ENCODE measurements at regions of chr2 and their contacts with region 1.

Region 1: GRCh38 chr2:222707689-222708525 is 36.4 kb downstream of the MOGAT1 start:
- DNase-seq: peak; percentile 53
- H3K4me3 Mint-ChIP-seq: no peak overlapping the region
- H3K27ac Mint-ChIP-seq: no peak overlapping the region
- H3K4me1 Mint-ChIP-seq: peaks cover 18% of the 10 kb centered on the region
- H3K27me3 Mint-ChIP-seq: peaks cover 33% of the 10 kb centered on the region

Region 2: DNA sequence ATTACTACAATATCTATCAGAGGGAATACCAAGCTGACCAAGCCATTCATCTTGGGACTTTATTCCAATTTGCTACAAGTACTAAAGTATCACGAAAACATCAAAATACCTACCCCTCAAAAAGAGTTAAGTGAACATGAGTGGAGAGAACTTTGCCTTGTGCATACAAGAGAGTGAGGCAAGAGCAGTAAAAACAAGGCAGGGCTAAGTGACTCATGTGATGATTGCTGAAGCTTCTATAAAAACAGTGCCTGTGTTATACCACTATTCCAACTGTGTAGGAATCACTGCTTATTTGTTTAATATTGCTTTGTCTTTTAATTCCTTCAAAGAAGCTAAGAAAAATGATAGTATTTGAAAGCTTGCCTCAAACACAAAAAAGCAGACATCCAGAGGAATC is 113.2 kb before region 1 on chr2:
- intact Hi-C with region 1: no loop called
- DNase-seq: no peak
- H3K4me3 Mint-ChIP-seq: no peak overlapping the region
- H3K27ac Mint-ChIP-seq: no peak overlapping the region
- H3K4me1 Mint-ChIP-seq: peaks cover 2% of the 10 kb centered on the region
- H3K27me3 Mint-ChIP-seq: no peaks in the 10 kb centered on the region

Region 3: GRCh38 chr2:222747526-222748160 is 39.7 kb after region 1 on chr2:
- intact Hi-C with region 1: loop called (anchors 5 kb)
- DNase-seq: no peak
- H3K4me3 Mint-ChIP-seq: no peak overlapping the region
- H3K27ac Mint-ChIP-seq: no peak overlapping the region
- H3K4me1 Mint-ChIP-seq: peaks cover 45% of the 10 kb centered on the region
- H3K27me3 Mint-ChIP-seq: peaks cover 2% of the 10 kb centered on the region

Region 4: GRCh38 chr2:222792001-222792611 is 84.2 kb after region 1 on chr2:
- intact Hi-C with region 1: loop called (anchors 5 kb)
- DNase-seq: no peak
- H3K4me3 Mint-ChIP-seq: no peak overlapping the region
- H3K27ac Mint-ChIP-seq: no peak overlapping the region
- H3K4me1 Mint-ChIP-seq: peaks cover 13% of the 10 kb centered on the region
- H3K27me3 Mint-ChIP-seq: peaks cover 2% of the 10 kb centered on the region

Region 5: DNA sequence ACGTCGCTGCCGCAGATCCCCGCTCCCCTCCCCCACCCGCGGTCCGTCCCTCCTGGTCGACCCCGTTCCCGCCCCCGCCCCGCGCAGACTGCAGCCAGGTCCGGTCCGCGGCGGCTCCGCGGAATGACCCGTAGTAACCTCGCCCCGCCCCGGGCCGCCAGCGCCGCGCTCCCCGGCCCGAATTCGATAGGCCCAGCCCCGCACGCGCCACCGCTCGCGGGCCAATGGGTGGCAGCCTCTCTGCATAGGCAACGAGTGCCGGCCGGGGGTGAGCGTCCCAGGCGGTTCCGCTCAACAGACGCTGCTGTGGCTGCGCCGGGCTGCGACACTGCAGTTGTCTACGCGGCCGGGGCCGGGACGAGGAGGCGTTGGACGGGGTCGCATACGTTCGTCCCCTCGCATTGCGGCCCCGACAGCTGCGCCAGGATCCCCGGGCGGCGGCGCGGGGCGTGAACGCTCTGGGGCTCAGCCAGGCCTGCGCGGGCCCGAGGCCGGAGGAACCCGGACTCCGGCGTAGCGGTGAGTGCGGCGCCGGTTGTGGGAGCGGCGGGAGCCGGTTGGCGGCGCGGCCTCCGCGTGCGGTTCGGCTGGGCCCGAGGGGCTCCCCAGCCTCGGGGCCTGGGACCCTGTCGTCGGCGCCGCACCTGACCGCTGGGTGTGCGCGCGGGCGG is 153.0 kb after region 1 on chr2 and contains the start of gene ACSL3:
- intact Hi-C with region 1: loop called (anchors 1 kb)
- DNase-seq: peak; percentile 93
- H3K4me3 Mint-ChIP-seq: peak within 1 kb of the TSS; percentile 76
- H3K27ac Mint-ChIP-seq: peak within 1 kb of the TSS; percentile 86
- H3K4me1 Mint-ChIP-seq: peaks cover 9% of the 10 kb centered on the region
- H3K27me3 Mint-ChIP-seq: peaks cover 11% of the 10 kb centered on the region
- total RNA-seq, gene ACSL3: 72.5 and 74.0 TPM in 2 replicates

Region 6: DNA sequence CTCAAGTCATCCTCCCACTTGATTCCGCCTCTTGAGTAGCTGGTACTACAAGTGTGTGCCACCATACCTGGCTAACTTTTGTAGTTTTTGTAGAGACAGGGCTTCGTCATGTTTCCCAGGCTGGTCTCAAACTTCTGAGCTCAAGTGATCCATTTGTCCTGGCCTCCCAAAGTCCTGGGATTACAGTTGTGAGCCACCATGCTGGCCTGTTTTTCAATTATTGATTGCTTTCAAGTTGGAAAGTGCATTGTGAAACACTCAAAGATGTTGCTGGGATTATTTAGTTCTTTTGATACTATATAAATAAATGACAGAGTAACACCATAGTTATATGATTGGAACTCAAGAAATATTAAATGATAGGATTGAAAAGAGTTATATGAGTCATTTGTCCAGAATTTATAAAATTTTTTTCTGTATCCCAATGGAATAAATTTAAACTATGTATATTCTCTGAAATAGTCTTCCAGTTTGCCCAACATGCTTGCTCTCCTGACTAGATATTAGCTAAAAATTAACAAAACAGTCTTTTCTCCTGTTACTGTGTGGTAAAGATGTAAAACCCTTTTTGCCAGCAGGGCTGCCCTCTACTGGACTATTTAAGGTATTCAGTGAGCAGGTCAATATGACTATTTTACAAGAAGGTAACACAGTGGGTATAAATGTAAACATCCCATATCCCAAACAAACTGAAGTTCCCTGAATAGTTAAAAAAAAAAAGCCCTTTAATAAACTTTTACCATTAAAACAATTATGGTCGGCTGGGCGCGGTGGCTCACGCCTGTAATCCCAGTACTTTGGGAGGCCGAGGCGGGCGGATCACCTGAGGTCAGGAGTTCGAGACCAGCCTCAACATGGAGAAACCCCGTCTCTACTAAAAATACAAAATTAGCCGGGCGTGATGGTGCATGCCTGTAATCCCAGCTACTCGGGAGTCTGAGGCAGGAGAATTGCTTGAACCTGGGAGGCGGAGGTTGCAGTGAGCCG is 195.6 kb after region 1 on chr2:
- intact Hi-C with region 1: loop called (anchors 1 kb)
- DNase-seq: no peak
- H3K4me3 Mint-ChIP-seq: no peak overlapping the region
- H3K27ac Mint-ChIP-seq: no peak overlapping the region
- H3K4me1 Mint-ChIP-seq: peaks cover 26% of the 10 kb centered on the region
- H3K27me3 Mint-ChIP-seq: no peaks in the 10 kb centered on the region

Region 7: GRCh38 chr2:222939208-222939856 is 231.4 kb after region 1 on chr2:
- intact Hi-C with region 1: loop called (anchors 1 kb)
- DNase-seq: peak; percentile 53
- H3K4me3 Mint-ChIP-seq: no peak overlapping the region
- H3K27ac Mint-ChIP-seq: no peak overlapping the region
- H3K4me1 Mint-ChIP-seq: peaks cover 17% of the 10 kb centered on the region
- H3K27me3 Mint-ChIP-seq: no peaks in the 10 kb centered on the region

Measured in activated T-helper 2 cell treated with anti-CD3 and anti-CD28 coated beads, Interferon-gamma antibody, Interleukin-2, Interleukin-4, amounts not matched to agents 10 μg/mL and 5 μg/mL and 100 μg/mL, durations not matched to agents 14 hours and 24 hours and 36 hours (primary cell).